Mammary epithelial cell (primary cell): ENCODE measurements at regions of chr9 and their contacts with region 1.

Region 1: DNA sequence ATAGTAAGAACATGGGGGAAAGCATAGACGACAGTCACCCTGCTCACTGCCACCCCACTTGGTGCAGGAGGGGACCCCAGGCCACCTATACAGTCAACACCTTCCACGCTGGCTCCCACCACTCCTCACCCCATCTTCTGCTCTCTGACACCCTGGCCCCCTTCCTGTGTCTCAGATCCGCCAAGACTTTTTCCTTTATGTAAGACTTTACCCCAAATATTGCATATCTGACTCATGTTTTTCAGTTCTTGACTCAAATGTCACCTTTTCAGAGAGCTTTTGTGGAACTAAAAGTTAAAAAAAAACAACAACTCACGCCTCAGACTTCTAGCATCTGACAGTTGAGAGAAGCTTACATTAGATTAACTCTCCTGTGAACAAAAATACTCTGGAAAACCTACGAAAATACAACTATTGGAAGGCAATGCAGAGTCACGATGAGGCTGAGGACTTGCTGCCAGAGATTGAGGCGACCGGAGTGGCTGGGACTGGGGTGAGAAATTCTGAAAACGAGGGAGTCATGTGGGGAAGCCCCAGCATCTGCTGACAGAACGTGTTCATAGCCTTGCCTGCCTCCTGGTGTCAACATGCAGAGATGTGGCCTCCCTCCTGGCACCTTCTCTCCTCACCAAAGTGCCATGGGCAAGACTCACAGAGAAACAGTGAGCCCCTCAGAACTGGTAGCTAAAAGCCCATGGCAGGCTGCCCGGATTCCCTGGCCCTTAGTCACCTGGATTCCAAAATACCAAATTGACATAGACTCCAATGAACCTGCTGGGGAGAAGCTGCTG is 22.4 kb upstream of the FCN2 start:
- DNase-seq: peak; percentile 72
- H3K4me3 ChIP-seq: no peak overlapping the region
- H3K27ac ChIP-seq: no peak overlapping the region
- H3K4me1 ChIP-seq: no peaks in the 10 kb centered on the region
- H3K27me3 ChIP-seq: no peaks in the 10 kb centered on the region
- CTCF ChIP-seq: peak in 1 of 2 donors; percentile 18

Region 2: GRCh38 chr9:134698587-134699342 is 159.5 kb before region 1 on chr9:
- CTCF ChIA-PET with region 1: no interaction called
- dilution Hi-C with region 1: no loop called
- in situ Hi-C with region 1: no loop called
- intact Hi-C with region 1: loop called (anchors 2 kb)
- DNase-seq: peak; percentile 4
- H3K4me3 ChIP-seq: no peak overlapping the region
- H3K27ac ChIP-seq: no peak overlapping the region
- H3K4me1 ChIP-seq: no peaks in the 10 kb centered on the region
- H3K27me3 ChIP-seq: no peaks in the 10 kb centered on the region
- CTCF ChIP-seq: peak; percentile 32 to 53

Region 3: DNA sequence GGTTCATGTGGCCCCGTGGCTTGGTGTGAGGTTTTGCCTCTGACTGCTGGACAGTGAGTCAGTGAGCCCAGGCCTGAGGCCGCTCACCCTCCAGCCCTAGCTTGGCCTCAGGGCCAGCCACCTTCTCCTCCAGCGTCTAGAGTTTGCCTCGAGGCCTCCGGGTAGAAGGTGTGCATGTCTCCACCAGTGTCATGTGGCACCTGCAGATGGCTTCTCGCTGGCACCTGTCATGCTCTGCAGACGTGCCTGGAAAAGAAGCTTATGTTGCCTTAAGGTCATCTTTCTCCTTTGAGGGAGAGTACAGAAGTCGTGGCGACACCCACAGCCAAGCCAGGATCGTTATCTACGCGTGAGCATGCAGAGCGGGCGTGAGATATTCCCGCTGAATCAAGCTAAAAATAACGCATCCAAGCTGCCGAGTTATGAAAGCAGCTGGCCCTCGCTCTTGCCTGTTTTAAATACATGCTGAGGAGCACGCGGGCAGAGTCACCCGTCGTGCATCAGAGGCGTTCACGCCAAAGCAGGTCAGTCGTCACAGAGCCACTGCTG is 57.4 kb before region 1 on chr9:
- CTCF ChIA-PET with region 1: no interaction called
- dilution Hi-C with region 1: loop called (anchors 5 kb)
- in situ Hi-C with region 1: no loop called
- intact Hi-C with region 1: no loop called
- DNase-seq: no peak
- H3K4me3 ChIP-seq: no peak overlapping the region
- H3K27ac ChIP-seq: no peak overlapping the region
- H3K4me1 ChIP-seq: no peaks in the 10 kb centered on the region
- H3K27me3 ChIP-seq: no peaks in the 10 kb centered on the region
- CTCF ChIP-seq: no peak

Region 4: GRCh38 chr9:134899819-134900218 is 41.6 kb after region 1 on chr9:
- CTCF ChIA-PET with region 1: no interaction called
- dilution Hi-C with region 1: no loop called
- in situ Hi-C with region 1: no loop called
- intact Hi-C with region 1: no loop called
- DNase-seq: peak; percentile 3
- H3K4me3 ChIP-seq: no peak overlapping the region
- H3K27ac ChIP-seq: no peak overlapping the region
- H3K4me1 ChIP-seq: no peaks in the 10 kb centered on the region
- H3K27me3 ChIP-seq: no peaks in the 10 kb centered on the region
- CTCF ChIP-seq: no peak

Region 5: DNA sequence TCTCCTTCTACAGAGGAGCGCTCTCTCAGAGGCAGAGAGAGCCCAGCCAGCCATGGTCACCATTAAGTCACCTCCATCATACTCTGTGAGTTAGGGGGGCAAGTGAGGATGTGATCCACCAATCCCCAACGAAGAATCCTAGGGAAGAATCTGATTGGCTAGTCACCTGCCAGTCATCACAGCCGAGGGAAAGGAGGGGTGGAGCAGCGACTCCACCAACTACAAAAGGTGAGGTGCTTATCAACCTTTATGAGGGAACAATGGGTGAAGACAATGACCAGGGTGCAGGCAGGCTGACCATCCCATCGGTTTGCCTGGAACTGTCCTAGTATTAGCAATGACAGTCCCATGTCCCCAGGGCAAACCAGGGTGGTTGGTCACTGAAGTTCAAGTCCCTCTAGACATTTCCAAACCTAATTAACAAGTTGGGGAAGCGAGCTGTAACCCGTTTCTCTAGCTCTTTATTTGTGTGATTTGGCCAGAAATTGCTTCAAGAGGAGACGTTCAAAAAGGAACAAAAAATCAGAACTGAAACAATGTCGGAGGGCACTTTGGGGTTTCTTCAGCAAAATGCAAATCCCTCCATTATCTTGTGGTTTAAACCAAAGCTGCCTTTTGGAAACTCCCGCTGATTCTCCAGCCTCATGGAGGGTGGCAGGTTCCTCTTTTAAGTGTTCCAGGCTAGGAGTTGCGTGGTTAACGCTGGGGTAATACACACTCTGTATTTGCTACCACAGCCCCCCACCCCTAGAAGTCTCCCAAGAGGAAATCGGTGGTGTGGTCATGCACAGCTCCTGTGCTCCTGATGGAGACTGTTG is 78.3 kb after region 1 on chr9:
- CTCF ChIA-PET with region 1: no interaction called
- dilution Hi-C with region 1: loop called (anchors 5 kb)
- in situ Hi-C with region 1: no loop called
- intact Hi-C with region 1: no loop called
- DNase-seq: no peak
- H3K4me3 ChIP-seq: no peak overlapping the region
- H3K27ac ChIP-seq: no peak overlapping the region
- H3K4me1 ChIP-seq: no peaks in the 10 kb centered on the region
- H3K27me3 ChIP-seq: no peaks in the 10 kb centered on the region
- CTCF ChIP-seq: no peak

Region 6: DNA sequence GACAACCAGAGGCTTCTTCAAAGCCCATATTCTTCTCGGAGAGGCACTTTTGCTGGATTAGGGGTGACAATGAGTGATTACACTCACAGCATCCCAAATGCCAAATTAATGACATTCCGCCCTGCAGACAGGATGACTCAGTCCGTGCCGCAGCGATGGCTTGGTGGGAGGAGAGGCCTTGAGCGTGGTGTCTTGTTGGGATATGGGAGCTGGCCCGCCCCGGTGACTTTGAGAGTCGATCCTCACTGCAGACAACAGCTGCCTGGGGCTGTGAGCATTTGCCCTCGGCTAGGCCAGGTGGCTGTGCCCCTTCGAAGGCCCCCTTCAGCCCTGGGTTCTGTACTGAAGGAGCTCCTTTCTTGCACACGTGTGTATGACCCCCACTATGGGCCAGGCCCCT is 259.0 kb after region 1 on chr9:
- CTCF ChIA-PET with region 1: no interaction called
- dilution Hi-C with region 1: no loop called
- in situ Hi-C with region 1: no loop called
- intact Hi-C with region 1: no loop called
- DNase-seq: no peak
- H3K4me3 ChIP-seq: no peak overlapping the region
- H3K27ac ChIP-seq: no peak overlapping the region
- H3K4me1 ChIP-seq: no peaks in the 10 kb centered on the region
- H3K27me3 ChIP-seq: no peaks in the 10 kb centered on the region
- CTCF ChIP-seq: no peak

Region 7: DNA sequence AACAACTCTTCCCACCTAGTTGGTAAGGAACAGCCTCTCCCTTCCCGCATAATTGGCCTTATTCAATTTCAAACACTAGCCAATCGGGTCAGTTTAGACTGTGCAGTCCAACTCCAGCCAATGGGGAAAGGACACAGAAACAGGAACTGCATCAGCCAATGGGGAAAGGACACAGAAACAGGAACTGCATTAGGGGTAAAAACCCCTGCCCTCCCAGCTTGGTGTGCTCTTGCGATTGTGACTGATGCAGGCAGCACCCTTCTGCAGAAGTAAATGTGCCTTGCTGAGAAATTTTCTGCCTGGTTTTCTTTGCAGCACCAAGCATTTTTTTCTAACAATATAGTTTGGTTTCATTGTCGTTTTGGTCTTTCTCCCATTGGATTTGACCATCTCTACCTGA is 789.6 kb after region 1 on chr9:
- CTCF ChIA-PET with region 1: no interaction called
- dilution Hi-C with region 1: no loop called
- in situ Hi-C with region 1: no loop called
- intact Hi-C with region 1: no loop called
- DNase-seq: no peak
- H3K4me3 ChIP-seq: no peak overlapping the region
- H3K27ac ChIP-seq: no peak overlapping the region
- H3K4me1 ChIP-seq: no peaks in the 10 kb centered on the region
- H3K27me3 ChIP-seq: no peaks in the 10 kb centered on the region
- CTCF ChIP-seq: no peak